ENCODE measurements at regions of chr10 and their contacts with region 1.

Region 1: GRCh38 chr10:43905512-43906236 is 257.0 kb upstream of the ZNF32 start:
- DNase-seq: no peak
- ATAC-seq: peak; percentile 27
- H3K4me3 ChIP-seq: no peak overlapping the region
- H3K27ac ChIP-seq: peak overlapping the region in 1 of 2 donors; percentile 5
- H3K4me1 ChIP-seq: no peaks in the 10 kb centered on the region
- H3K27me3 ChIP-seq: no peaks in the 10 kb centered on the region

Region 2: DNA sequence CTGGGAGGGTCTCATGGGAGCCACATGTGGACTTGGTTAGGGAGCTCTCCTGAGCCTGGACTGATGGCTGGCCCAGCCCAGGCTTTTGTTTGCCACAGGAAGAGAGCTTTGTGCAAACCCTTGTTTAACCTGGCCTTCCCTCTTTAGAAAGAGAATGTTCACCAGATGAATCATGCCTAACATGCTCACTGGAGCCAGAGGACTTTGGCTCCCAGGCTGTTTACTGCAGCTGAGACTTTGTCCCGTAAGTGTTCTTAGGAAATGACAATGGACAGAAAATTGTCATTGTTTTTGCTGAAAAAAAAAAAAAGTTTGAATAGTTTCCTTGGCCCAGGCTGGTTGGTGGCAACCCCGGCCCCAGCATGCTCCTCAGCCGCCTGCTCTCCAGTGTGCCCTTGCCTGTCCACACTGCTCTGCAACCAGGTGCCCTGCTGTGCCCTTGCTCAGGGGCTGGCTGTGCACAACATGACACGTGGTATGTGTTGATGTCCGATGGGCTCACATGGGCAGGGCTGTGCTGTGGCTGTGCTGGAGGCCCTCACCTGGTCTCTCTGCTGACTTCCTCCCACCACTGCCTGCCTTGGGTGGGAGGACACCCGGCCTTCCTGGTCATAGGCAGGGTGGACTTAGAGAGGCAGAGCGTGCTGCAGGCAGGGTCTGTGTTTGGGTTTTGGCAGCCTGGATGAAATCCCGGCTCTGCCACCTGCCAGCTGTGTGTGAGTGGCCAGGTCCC is 41.6 kb before region 1 on chr10:
- intact Hi-C with region 1: loop called in 1 of 2 experiments (anchors 5 kb)
- DNase-seq: peak in 1 of 2 donors; percentile 71
- ATAC-seq: peak; percentile 86
- H3K4me3 ChIP-seq: no peak overlapping the region
- H3K27ac ChIP-seq: peak overlapping the region; percentile 49 to 94
- H3K4me1 ChIP-seq: peaks cover 4 to 16% of the 10 kb centered on the region in 2 donors
- H3K27me3 ChIP-seq: no peaks in the 10 kb centered on the region

Region 3: DNA sequence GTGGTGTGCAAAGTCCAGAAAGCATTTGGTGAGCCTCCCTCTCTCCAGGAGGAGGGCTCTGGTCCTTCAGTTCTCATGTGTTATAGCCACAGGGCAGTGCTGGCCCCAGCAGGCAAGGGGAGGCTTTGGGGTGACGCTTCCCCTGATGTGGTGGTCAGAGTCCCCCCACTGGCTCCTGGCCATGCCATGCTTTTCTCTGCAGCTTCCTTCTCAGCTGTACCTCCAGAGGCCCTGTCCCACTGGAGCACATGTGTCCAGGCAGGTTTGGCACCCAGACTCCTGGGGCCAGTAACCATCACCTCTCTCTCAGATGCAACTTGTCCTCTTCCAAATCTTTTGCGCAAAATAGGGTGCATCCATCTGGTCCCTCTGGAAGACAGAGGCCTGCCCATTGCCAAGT is 24.0 kb before region 1 on chr10:
- intact Hi-C with region 1: loop called in 1 of 2 experiments (anchors 2 kb)
- DNase-seq: no peak
- ATAC-seq: no peak
- H3K4me3 ChIP-seq: no peak overlapping the region
- H3K27ac ChIP-seq: no peak overlapping the region
- H3K4me1 ChIP-seq: no peaks in the 10 kb centered on the region
- H3K27me3 ChIP-seq: no peaks in the 10 kb centered on the region

Measured in aorta (tissue), 5 donors.